Motor neuron (in vitro differentiated cells): ENCODE measurements at regions of chr14 and their contacts with region 1.

Region 1: DNA sequence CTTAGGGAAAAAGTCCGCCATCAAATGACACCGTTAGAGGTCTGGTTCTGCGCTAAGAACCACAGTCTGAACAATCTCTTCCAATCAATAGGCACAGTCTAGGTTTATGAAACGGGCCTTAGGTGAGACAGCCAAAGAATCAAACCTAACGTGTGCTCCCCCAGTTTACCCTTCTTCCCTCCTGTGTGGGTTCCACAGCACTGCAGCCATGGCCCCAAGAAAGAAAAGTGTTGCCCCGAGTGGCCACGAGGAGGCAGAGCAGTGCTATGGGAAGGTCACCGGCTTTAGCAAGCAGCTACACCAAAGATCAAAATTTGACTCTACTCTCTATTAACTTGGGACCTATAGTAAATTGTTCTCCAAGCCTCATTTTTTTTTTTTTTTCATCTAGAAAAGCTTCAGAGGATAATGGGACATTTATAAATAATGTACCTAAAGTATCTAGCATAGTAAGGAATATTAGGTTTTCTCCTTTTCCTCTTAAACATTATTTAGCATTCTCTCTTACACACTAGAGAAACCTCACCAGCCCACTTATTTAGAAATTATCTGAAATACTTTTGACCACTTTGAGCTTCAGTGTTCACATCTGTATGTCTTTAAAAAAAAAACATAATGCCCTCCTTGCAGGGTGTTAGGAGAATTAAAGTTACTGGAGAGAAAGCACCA is 70.2 kb upstream of the GPHB5 start:
- ATAC-seq: peak in 6 of 8 experiments; percentile 31 to 82 (median 66)
- H3K4me3 ChIP-seq: no peak overlapping the region
- H3K27ac ChIP-seq: no peak overlapping the region
- H3K4me1 ChIP-seq: no peaks in the 10 kb centered on the region

Region 2: DNA sequence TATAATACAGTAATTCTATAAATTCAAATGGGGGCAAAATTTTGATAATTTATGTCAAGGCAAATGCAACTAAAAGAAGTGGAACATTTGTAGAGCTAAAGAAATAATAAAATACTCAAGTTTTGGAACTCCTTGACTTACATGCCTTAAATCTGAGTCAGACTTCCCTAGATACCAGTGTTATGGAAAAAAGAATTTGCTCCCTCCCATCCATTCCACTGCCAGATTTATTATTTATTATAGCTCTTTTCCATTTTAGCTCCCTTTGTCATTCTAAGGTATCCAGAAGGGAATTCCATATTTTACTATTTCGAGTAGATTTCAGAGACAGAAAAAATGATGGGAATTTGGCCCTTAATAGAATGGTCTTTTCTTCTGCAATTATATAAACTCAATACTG is 140.7 kb before region 1 on chr14:
- in situ Hi-C with region 1: no loop called
- ATAC-seq: peak in 1 of 8 experiments; percentile 34
- H3K4me3 ChIP-seq: no peak overlapping the region
- H3K27ac ChIP-seq: no peak overlapping the region
- H3K4me1 ChIP-seq: no peaks in the 10 kb centered on the region

Region 3: DNA sequence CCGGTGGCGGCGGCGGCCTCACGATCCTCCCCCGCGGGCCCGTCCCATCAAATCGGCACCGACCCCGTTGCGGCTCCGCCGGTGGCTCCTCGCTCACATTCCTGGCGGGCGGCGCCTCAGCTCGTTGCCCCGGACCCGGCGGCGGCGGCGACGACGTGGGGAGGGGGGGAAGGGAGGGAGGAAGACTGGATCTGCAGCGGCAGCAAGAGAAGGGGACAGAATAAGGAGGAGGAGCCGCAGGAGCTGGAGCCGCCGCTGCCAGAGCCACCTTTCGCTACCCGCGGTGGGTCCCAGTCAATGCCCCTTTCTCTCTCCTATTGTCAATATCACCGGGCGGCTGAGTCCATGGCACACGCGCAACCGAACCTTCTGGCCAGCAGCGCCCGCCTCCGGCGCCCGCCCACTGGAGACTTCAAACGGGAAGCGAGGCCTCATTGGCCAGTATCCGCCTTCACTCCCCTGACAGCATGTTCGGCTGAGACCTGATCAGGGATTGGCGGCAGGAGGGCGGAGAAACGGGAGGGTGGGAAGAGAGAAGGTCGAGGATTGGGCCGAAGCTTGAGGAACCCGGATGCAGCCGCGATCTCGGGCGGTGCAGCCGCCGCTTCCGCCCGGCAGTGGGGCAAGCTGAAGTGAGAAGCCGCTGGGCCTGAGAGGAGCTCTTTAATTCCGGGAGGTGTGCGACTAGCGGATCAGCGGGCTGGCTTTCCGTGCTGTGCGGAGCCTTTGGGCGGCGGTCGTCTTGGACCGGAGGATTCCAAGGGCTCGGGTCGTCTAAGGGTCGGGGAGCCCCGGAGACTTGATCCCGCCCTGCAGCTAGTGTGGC is 154.3 kb after region 1 on chr14 and contains the start of gene PPP2R5E:
- in situ Hi-C with region 1: loop called in 1 of 9 experiments (anchors 10 kb)
- ATAC-seq: peak; percentile 94 to 97 (median 96)
- H3K4me3 ChIP-seq: peak within 1 kb of the TSS; percentile 75 to 93 (median 82)
- H3K27ac ChIP-seq: peak within 1 kb of the TSS; percentile 87 to 88
- H3K4me1 ChIP-seq: peaks cover 8 to 9% of the 10 kb centered on the region in 2 donors
- total RNA-seq, gene PPP2R5E: 10.3 to 39.2 (median 27.6) TPM

Region 4: GRCh38 chr14:63641473-63642228 is 252.8 kb after region 1 on chr14 and contains the start of gene WDR89:
- in situ Hi-C with region 1: loop called in 1 of 9 experiments (anchors 25 kb)
- ATAC-seq: peak; percentile 90 to 94 (median 92)
- H3K4me3 ChIP-seq: peak within 1 kb of the TSS; percentile 60 to 81 (median 66)
- H3K27ac ChIP-seq: peak within 1 kb of the TSS; percentile 89 to 93
- H3K4me1 ChIP-seq: peaks cover 5 to 7% of the 10 kb centered on the region in 2 donors
- total RNA-seq, gene WDR89: 11.9 to 22.5 (median 16.4) TPM